Activated CD4-positive, alpha-beta memory T cell treated with anti-CD3 and anti-CD28 coated beads for 36 hours (primary cell): ENCODE measurements at regions of chr3 and their contacts with region 1.

Region 1: DNA sequence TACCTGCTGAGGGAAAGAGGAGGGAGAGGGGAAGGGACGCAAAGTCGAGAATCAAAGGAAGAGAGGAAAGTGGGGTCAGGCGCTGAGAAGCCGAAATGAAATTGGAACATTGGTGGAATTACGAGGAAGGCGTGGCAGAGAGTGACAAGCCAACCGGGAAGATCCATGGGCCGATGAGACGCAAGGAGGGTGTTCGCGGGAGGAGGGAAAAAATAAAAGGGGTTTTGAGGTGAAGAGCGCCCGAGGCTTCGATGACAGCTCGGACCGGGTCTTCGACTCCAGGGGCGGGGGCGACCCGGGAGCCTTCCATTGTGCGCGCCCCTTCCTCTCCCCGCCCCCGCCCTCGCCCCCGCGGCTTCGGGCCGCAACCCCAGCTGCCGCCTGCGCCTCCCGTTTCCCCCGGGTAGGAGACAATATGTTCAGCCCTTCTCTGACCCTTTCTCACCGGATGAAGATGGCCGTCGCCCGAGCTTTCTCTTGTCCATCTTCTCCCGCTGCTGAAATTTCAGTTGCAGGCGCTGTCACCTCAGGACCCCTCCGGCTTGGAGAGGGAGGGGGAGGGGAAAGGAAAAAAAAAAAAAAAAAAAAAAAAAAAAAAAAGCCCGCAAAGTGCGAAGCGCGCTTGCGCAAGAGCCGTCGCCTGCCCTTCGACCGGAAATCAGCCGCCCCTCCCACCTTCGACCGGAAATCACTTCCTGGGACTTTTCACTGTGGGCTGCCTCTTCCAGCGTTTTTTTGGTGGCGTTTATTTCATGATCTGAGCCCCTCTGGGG is at the start of gene SENP7:
- DNase-seq: peak; percentile 86
- H3K4me3 Mint-ChIP-seq: peak within 1 kb of the TSS; percentile 99
- H3K27ac Mint-ChIP-seq: peak within 1 kb of the TSS; percentile 99
- H3K4me1 Mint-ChIP-seq: peaks cover 44% of the 10 kb centered on the region
- H3K27me3 Mint-ChIP-seq: no peaks in the 10 kb centered on the region
- total RNA-seq, gene SENP7: 15.8 to 18.4 TPM

Region 2: GRCh38 chr3:101561630-101562328 is 48.9 kb after region 1 on chr3 and contains the start of gene TRMT10C:
- CTCF ChIA-PET with region 1: interaction called, 4 read pairs
- POLR2A ChIA-PET with region 1: interaction called, 18 read pairs
- intact Hi-C with region 1: loop called (anchors 1 kb)
- DNase-seq: peak; percentile 96
- H3K4me3 Mint-ChIP-seq: peak within 1 kb of the TSS; percentile 97
- H3K27ac Mint-ChIP-seq: peak within 1 kb of the TSS; percentile 96
- H3K4me1 Mint-ChIP-seq: peaks cover 37% of the 10 kb centered on the region
- H3K27me3 Mint-ChIP-seq: peaks cover 3% of the 10 kb centered on the region
- total RNA-seq, gene TRMT10C: 39.5 to 43.2 TPM